Right ventricle myocardium inferior (tissue), 1 donor: ENCODE measurements at regions of chr1 and their contacts with region 1.

Region 1: DNA sequence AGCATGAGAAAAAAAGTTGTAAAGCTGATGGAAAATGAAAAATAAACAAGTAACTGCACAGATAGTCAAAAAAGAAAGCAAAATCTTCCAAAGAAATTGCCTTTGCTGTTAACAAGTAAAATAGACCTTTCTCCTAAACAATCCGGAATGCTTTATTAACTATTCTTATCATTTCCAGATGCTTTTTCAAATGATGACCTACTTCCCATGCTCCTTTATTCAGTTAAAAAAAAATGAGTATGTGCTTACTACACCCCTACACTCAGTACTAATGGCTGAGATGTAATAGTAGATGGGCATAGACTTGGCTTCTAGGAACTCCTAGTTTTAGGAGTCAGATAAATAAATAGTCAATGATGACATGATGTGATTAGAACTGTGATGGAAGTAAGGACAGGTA is 108.5 kb downstream of the NIBAN1 start:
- DNase-seq: no peak
- ATAC-seq: no peak

Region 2: DNA sequence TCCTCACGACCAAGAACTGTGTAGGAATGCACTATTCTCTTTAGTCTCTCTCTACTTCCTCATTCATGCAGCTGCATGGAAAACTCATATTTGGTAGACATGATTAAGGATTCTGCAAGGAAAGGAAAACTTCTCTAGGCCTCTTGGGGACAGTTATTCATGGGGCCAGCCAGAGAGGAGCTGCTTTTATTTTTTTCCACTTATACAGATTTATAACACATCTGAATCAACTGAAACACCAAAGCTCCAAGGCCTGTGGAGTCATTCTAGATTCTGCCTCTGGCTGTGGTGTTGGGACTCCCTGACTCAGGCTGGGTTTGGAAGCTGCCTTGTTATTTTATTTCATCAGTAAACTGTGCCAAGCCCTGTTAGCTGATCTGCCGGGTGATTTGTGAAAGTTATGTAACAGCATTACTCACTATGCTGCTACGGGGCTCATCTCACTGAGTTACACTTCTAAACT is 27.3 kb before region 1 on chr1:
- intact Hi-C with region 1: loop called (anchors 1 kb)
- DNase-seq: no peak
- ATAC-seq: peak; percentile 93